ENCODE measurements at regions of chrX and their contacts with region 1.

Region 1: DNA sequence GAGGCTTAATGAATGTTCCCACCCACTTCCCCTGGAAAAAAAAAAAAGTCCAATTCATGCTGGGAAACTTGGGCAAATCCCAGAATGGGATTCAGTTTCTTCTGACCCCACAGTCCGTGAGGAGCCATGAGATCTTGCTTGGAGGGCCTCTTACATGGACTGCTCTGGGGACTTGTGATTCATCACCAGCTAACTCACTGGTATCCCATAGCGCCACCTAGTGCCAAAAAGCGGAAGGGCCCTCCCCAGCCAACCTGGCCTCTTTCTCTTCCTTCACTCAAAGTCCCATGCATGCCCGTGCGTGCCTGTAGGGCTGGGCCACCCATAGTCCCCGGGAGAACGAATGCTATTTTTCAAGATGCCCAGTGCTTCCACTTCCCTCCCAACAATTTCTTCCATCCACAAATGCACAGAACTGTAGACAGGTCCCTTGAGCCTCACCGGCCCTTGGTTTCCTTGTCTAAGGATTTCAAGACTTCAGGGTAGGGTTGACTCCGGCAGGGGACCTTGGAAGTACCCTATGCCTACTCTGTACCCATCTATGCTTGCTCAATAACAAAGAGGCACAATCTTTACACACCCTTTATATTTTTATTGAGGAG is 5.1 kb downstream of the RTL5 start:
- DNase-seq: peak; percentile 45
- ATAC-seq: peak; percentile 83
- H3K4me3 ChIP-seq: no peak overlapping the region
- H3K27ac ChIP-seq: no peak overlapping the region
- H3K4me1 ChIP-seq: peaks cover 0 to 10% of the 10 kb centered on the region in 2 experiments; a peak in 1 of 4 replicates
- H3K27me3 ChIP-seq: no peaks in the 10 kb centered on the region
- CTCF ChIP-seq: peak; percentile 64 to 80 (median 71)
- POLR2A ChIP-seq: no peak
- RAD21 ChIP-seq: peak; percentile 72

Region 2: DNA sequence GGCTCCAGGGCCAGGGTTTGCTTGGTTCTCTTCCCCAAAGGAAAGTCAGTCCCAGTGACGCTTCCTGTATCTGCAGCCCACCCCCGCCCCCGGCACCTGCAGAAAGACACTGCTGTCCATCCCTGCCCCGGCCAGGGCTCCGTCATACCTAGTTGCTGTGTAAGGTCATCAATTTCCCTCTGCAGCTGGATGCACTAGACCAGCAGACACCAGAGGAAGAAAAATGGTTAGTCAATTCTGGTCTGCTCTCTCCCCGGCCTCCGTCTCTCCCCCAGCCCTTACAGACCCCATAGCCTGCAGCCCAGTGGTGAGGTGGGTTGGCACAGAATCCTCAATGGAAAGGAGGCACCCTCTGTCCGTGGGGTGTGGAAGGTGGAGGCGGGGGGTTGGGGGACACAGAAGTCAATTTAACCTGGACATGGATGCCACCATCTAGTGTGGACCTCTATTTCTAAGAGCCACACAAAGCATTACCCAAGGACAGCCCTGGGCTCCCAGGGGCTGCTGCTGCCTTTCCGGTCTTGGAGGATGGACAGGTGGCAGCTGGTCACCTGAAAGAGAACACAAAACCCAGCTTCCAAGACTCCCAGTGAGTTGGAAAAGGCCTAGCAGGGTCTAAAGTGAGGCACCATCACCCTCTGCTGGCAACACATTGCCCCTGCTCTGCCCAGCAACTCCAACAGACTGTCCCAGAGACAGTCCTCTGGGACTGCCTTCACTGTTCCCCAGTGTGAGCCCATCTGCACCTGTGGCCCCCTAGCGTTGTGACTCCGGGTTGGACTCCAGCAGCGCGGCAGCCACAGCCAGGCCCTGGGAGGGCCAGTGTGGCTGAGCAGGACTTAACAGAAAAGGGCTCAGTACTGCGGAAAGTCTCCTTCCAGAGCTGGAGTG is 256.2 kb before region 1 on chrX:
- CTCF ChIA-PET with region 1: no interaction called
- POLR2A ChIA-PET with region 1: no interaction called
- RAD21 ChIA-PET with region 1: no interaction called
- intact Hi-C with region 1: loop called (anchors 10 kb)
- DNase-seq: peak; percentile 39
- ATAC-seq: peak; percentile 99
- H3K4me3 ChIP-seq: no peak overlapping the region
- H3K27ac ChIP-seq: no peak overlapping the region
- H3K4me1 ChIP-seq: no peaks in the 10 kb centered on the region
- H3K27me3 ChIP-seq: no peaks in the 10 kb centered on the region
- CTCF ChIP-seq: peak; percentile 53 to 69 (median 68)
- POLR2A ChIP-seq: no peak
- RAD21 ChIP-seq: peak; percentile 57

Region 3: DNA sequence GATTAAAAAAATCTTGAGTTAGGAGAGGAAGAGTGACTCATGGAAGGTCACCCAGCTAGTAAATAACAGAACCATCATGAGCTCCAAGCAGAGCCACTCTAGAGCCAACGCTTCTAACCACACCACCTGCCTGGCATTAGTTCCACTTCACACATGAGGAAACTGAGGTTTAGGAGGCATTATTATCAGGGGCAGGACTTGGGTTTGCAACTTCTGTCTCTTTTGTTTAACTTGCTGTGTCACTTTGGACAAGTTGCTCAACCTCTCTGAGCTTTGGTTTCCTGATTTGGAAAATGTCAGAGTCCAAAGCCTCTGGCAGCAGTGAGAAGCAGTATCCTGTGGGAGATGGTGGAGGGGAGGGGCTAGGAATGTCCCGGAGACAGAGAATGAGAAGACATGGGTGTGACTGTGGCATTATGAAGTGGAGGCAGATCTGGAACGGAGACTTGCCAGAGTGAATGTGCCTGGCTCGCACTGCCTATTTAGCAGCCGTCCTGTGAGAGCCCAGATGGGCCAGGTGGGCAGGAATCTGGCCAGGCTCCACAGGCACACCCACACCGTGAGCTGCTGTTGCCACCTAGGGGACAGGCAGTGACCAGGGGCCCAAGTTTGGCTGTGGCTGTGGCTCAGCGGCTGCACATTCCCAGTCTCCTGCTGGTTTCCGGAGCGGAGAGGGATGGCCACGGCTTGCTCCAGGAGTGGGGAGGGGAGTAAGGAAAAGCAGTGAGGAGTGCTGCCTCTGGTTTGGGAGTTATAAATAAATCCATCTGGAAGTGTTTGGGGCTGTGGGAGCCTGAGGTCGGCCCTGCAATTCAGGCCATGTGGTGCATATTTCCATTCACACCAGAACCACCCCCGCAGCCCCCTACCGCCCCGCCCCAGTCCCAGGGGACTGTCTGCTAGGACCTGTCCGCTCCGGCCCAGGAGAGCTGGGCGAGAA is 122.6 kb before region 1 on chrX:
- CTCF ChIA-PET with region 1: no interaction called
- POLR2A ChIA-PET with region 1: no interaction called
- RAD21 ChIA-PET with region 1: no interaction called
- intact Hi-C with region 1: loop called (anchors 5 kb)
- DNase-seq: peak; percentile 40
- ATAC-seq: peak; percentile 97
- H3K4me3 ChIP-seq: peak overlapping the region in 1 of 2 experiments; percentile 15; a peak in 1 of 4 replicates
- H3K27ac ChIP-seq: no peak overlapping the region
- H3K4me1 ChIP-seq: peaks cover 0 to 12% of the 10 kb centered on the region in 2 experiments; a peak in 2 of 4 replicates
- H3K27me3 ChIP-seq: no peaks in the 10 kb centered on the region
- CTCF ChIP-seq: peak; percentile 43 to 46 (median 44); a peak in 4 of 6 replicates
- POLR2A ChIP-seq: no peak
- RAD21 ChIP-seq: peak; percentile 66

Region 4: GRCh38 chrX:72018277-72019112 is 108.1 kb before region 1 on chrX:
- CTCF ChIA-PET with region 1: interaction called, 6 read pairs
- POLR2A ChIA-PET with region 1: no interaction called
- RAD21 ChIA-PET with region 1: interaction called in 1 of 2 experiments, 3 read pairs
- intact Hi-C with region 1: loop called (anchors 2 kb)
- DNase-seq: peak; percentile 55
- ATAC-seq: peak; percentile 89
- H3K4me3 ChIP-seq: peak overlapping the region in 1 of 2 experiments; percentile 38; a peak in 2 of 4 replicates
- H3K27ac ChIP-seq: peak overlapping the region; percentile 35; the same call in 1 of the 2 replicates
- H3K4me1 ChIP-seq: peaks cover 7 to 12% of the 10 kb centered on the region in 2 experiments; a peak in 3 of 4 replicates
- H3K27me3 ChIP-seq: no peaks in the 10 kb centered on the region
- CTCF ChIP-seq: peak; percentile 42 to 60 (median 48); a peak in 5 of 6 replicates
- POLR2A ChIP-seq: no peak
- RAD21 ChIP-seq: peak; percentile 43; the same call in 1 of the 2 replicates

Region 5: DNA sequence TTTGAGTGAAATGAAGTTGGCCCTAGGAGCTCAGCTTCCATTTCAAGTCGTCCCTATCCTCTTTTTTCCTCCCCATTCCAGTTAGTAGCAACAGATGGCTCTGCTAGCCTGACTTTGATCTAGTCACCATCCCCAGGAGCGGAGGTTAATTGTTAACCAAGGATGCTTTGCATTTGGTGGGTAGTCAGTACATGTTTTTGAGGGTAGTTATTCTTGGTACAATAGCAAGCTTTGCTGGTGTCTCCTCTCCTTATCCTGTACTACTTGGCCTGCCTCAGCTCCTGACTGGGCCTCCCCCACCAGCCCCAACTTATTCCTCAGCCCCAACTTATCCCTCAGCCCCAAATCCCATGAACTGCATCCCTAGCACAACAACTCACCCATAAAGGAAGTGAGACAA is 19.9 kb after region 1 on chrX:
- CTCF ChIA-PET with region 1: no interaction called
- POLR2A ChIA-PET with region 1: no interaction called
- RAD21 ChIA-PET with region 1: no interaction called
- intact Hi-C with region 1: no loop called
- DNase-seq: no peak
- ATAC-seq: no peak
- H3K4me3 ChIP-seq: no peak overlapping the region
- H3K27ac ChIP-seq: no peak overlapping the region
- H3K4me1 ChIP-seq: no peaks in the 10 kb centered on the region
- H3K27me3 ChIP-seq: no peaks in the 10 kb centered on the region
- CTCF ChIP-seq: no peak
- POLR2A ChIP-seq: no peak
- RAD21 ChIP-seq: no peak

Region 6: GRCh38 chrX:72408885-72409284 is 282.2 kb after region 1 on chrX:
- CTCF ChIA-PET with region 1: no interaction called
- POLR2A ChIA-PET with region 1: no interaction called
- RAD21 ChIA-PET with region 1: no interaction called
- intact Hi-C with region 1: no loop called
- DNase-seq: no peak
- ATAC-seq: no peak
- H3K4me3 ChIP-seq: no peak overlapping the region
- H3K27ac ChIP-seq: no peak overlapping the region
- H3K4me1 ChIP-seq: no peaks in the 10 kb centered on the region
- H3K27me3 ChIP-seq: no peaks in the 10 kb centered on the region
- CTCF ChIP-seq: no peak
- POLR2A ChIP-seq: no peak
- RAD21 ChIP-seq: no peak